Activated CD4-positive, alpha-beta T cell treated with anti-CD3 and anti-CD28 coated beads for 36 hours (primary cell): ENCODE measurements at regions of chr16 and their contacts with region 1.

Region 1: DNA sequence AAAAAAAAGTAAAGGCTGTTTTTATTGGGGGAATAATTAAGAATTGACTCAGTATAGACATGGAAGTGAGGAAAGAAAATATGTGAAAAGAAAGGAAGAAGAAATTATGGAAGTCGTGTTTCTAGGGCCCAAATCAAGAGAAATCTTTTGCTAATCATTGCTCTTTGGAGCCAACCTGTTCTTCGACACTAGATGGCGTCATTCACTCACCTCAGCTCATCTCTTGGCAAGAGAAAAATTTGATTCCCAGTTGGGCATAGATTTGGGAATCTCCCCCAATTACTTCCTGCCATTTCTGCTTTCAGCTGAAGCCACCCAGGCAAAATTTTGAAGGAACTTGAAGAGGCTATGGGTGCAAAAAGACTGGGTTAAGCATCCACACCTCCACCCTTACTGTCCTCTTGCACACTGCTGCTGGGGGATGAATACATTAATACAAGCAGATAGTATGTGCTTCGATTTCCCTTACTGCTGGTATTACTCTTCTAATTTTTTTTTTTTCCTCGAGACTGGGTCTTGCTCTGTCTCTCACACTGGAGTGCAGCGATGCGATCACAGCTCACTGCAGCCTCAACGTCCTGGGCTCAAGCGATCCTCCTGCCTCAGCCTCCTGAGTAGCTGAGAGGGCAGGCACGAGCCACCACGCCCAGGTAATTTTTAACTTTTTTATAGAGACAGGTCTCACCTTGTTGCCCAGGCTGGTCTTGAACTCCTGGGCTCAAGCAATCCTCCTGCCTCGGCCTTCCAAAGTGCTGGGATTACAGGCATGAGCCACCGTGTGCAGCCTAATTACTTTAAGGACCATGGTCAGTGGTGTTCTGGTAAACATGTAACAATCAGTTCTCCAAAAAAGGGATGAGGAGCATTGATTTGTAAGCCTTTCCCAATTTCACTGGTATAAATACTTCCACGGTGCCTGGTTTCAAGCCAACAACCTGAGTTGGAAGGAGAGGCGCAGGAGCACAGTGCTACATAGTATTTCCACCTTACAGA is 13.5 kb downstream of the PSMD7 start:
- DNase-seq: peak; percentile 30
- ATAC-seq: peak; percentile 42
- H3K4me3 Mint-ChIP-seq: no peak overlapping the region
- H3K27ac Mint-ChIP-seq: no peak overlapping the region
- H3K4me1 Mint-ChIP-seq: no peaks in the 10 kb centered on the region
- H3K27me3 Mint-ChIP-seq: no peaks in the 10 kb centered on the region

Region 2: GRCh38 chr16:74431516-74431915 is 121.4 kb after region 1 on chr16:
- CTCF ChIA-PET with region 1: interaction called, 6 read pairs
- POLR2A ChIA-PET with region 1: no interaction called
- intact Hi-C with region 1: loop called (anchors 1 to 2 kb)
- DNase-seq: no peak
- ATAC-seq: no peak
- H3K4me3 Mint-ChIP-seq: no peak overlapping the region
- H3K27ac Mint-ChIP-seq: no peak overlapping the region
- H3K4me1 Mint-ChIP-seq: no peaks in the 10 kb centered on the region
- H3K27me3 Mint-ChIP-seq: no peaks in the 10 kb centered on the region

Region 3: DNA sequence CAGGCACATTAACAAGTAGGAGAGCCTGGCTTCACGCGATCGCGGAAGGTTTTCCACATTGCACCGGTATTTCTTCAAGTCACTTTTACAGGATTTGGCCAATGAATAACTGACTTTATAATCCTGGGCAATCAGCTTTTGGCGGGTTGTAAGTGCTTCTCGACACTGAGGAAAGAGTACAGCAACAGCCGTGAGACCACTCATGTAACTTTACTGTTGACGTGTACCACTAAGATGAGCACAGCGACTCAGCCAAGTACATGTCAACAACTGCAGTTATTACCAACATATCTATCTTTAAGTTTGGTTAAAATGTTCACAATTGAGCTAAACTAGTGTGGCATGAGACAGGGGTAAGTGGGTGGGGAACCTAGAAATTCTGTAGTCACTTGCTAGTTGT is 182.9 kb after region 1 on chr16:
- CTCF ChIA-PET with region 1: no interaction called
- POLR2A ChIA-PET with region 1: no interaction called
- intact Hi-C with region 1: no loop called
- DNase-seq: no peak
- ATAC-seq: no peak
- H3K4me3 Mint-ChIP-seq: no peak overlapping the region
- H3K27ac Mint-ChIP-seq: no peak overlapping the region
- H3K4me1 Mint-ChIP-seq: peaks cover 2% of the 10 kb centered on the region
- H3K27me3 Mint-ChIP-seq: no peaks in the 10 kb centered on the region

Region 4: DNA sequence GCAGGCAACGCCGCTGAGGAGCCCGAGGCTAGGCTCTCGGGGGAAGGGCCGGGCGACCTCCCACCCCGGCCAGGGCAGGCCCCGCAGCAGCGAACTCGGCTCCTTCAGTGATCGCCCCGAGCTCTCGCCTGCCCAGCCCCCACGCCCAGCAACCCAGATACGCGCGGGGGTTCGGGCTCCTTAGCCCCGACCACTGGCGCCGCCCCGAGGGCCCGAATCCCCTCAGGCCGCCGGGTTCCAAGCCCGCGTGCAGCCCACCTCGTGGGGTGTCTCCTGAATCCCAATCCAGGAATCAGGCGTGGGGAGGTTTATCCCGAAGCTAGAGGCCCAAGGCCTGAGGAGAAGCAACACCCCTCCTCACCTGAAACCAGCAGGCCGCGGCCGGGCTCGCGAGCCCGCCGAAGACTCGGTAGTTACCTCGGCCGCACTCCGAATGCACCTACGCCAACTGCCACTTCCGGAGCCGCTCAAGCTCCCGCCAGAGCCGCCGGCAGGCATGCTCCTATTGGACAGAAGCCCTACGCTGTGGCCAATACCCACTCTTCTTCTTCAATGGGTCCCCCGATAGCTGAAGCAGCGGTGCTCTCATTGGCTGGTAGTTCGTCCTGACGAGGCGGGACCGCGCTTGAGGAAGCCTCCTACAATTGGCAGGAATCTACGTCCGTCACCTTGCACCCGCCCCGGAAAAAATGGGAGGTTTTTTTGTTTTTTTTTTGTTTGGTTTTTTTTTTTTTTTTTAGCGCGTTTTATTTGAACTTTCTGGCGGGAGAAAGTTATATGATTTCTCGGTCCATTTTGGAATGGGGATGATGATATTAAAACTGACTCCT is 356.6 kb after region 1 on chr16 and contains the start of gene RFWD3:
- CTCF ChIA-PET with region 1: no interaction called
- POLR2A ChIA-PET with region 1: no interaction called
- intact Hi-C with region 1: no loop called
- DNase-seq: peak; percentile 98
- ATAC-seq: peak; percentile 100
- H3K4me3 Mint-ChIP-seq: peak within 1 kb of the TSS; percentile 83
- H3K27ac Mint-ChIP-seq: peak within 1 kb of the TSS; percentile 97
- H3K4me1 Mint-ChIP-seq: peaks cover 42% of the 10 kb centered on the region
- H3K27me3 Mint-ChIP-seq: no peaks in the 10 kb centered on the region
- total RNA-seq, gene RFWD3: 92.7 to 102 TPM

Region 5: GRCh38 chr16:75340741-75341491 is 1030.8 kb after region 1 on chr16:
- CTCF ChIA-PET with region 1: no interaction called
- POLR2A ChIA-PET with region 1: no interaction called
- intact Hi-C with region 1: no loop called
- DNase-seq: no peak
- ATAC-seq: no peak
- H3K4me3 Mint-ChIP-seq: no peak overlapping the region
- H3K27ac Mint-ChIP-seq: no peak overlapping the region
- H3K4me1 Mint-ChIP-seq: no peaks in the 10 kb centered on the region
- H3K27me3 Mint-ChIP-seq: no peaks in the 10 kb centered on the region